Activated CD4-positive, alpha-beta T cell treated with anti-CD3 and anti-CD28 coated beads for 36 hours (primary cell): ENCODE measurements at regions of chr4 and their contacts with region 1.

Region 1: DNA sequence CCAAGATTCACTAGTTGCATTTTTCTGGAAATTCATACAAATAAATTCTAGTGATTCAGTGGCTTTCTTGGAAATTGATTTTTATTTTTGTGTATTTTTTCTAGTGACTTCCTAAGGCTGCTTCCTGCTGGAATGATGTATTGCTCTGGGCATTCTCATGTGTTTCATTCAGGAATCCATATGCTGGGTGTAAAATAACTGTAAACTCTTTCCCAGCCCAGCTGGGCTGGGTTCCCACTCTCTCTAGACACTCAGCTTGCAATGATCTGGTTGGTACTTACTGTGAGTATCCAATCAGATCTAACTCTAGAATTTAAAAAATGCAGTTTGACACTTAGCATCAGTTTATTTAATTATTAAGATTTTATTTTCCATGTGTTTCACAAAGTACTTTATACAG is 882.2 kb downstream of the STIM2 start:
- DNase-seq: no peak
- ATAC-seq: no peak
- H3K4me3 Mint-ChIP-seq: no peak overlapping the region
- H3K27ac Mint-ChIP-seq: no peak overlapping the region
- H3K4me1 Mint-ChIP-seq: no peaks in the 10 kb centered on the region
- H3K27me3 Mint-ChIP-seq: no peaks in the 10 kb centered on the region

Region 2: DNA sequence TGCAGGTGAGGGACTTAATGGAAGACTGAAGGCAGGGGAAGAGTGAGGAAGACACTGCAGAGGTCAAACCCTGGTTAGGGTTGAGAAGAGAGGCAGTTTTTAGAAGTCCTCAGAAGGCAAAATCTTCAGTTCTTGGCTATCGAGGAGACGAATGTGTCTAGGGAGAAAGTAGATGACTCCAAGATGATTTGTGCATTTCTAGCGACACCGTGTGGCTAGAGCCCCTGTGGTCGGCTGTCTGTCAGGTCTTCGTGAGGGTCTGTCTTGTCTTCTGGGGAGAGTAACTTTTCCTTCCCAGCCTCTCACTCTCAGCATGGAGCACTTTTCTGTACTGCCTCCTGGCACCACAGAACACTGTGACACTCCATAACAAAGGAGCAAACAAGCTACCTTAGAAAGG is 424.1 kb before region 1 on chr4:
- CTCF ChIA-PET with region 1: no interaction called
- POLR2A ChIA-PET with region 1: no interaction called
- intact Hi-C with region 1: no loop called
- DNase-seq: peak; percentile 45
- ATAC-seq: peak; percentile 44
- H3K4me3 Mint-ChIP-seq: no peak overlapping the region
- H3K27ac Mint-ChIP-seq: no peak overlapping the region
- H3K4me1 Mint-ChIP-seq: no peaks in the 10 kb centered on the region
- H3K27me3 Mint-ChIP-seq: peaks cover 9% of the 10 kb centered on the region

Region 3: DNA sequence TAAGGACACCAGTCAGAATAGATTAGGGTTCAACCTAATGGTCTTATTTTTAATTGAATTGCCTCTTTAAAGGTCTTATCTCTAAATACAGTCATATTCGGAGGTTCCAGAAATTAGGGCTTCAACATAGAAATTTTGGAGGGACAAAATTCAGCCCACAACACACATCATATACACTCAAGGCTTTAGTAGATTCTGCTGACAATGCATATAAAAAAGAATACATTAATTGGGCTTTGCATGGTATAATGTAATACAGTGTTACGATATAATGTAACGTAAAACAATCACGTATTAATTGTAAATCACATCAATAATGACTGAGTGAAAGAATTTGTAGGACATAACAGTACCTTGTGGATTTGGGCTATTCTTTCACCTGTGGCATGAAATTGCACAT is 94.4 kb before region 1 on chr4:
- CTCF ChIA-PET with region 1: no interaction called
- POLR2A ChIA-PET with region 1: no interaction called
- intact Hi-C with region 1: no loop called
- DNase-seq: no peak
- ATAC-seq: no peak
- H3K4me3 Mint-ChIP-seq: no peak overlapping the region
- H3K27ac Mint-ChIP-seq: no peak overlapping the region
- H3K4me1 Mint-ChIP-seq: no peaks in the 10 kb centered on the region
- H3K27me3 Mint-ChIP-seq: no peaks in the 10 kb centered on the region

Region 4: GRCh38 chr4:27666943-27667342 is 75.9 kb before region 1 on chr4:
- CTCF ChIA-PET with region 1: no interaction called
- POLR2A ChIA-PET with region 1: no interaction called
- intact Hi-C with region 1: loop called in 1 of 2 experiments (anchors 2 kb)
- DNase-seq: no peak
- ATAC-seq: no peak
- H3K4me3 Mint-ChIP-seq: no peak overlapping the region
- H3K27ac Mint-ChIP-seq: no peak overlapping the region
- H3K4me1 Mint-ChIP-seq: no peaks in the 10 kb centered on the region
- H3K27me3 Mint-ChIP-seq: no peaks in the 10 kb centered on the region